ENCODE measurements at regions of chr16 and their contacts with region 1.

Region 1: GRCh38 chr16:73161977-73162376 is 114.0 kb upstream of the ZFHX3 start:
- DNase-seq: no peak
- H3K4me3 Mint-ChIP-seq: no peak overlapping the region
- H3K27ac Mint-ChIP-seq: no peak overlapping the region
- H3K4me1 Mint-ChIP-seq: peaks cover 11% of the 10 kb centered on the region
- H3K27me3 Mint-ChIP-seq: no peaks in the 10 kb centered on the region
- CTCF ChIP-seq: no peak

Region 2: DNA sequence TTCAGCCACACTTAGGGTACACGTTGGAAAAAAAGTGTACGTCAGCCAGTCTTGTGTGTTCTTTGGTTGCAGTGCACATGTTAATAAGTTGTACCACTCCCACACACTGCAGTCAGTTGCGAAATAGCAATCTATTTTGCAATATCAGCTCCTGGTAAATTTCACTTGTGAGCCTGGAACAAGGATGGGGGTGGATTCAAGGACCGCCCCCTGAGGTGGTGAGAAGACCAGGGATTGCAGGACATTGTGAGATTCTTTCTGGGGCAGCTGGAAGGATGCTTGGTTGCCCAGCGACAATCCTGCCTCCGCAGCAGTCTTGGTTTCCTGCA is 35.5 kb before region 1 on chr16:
- CTCF ChIA-PET with region 1: no interaction called
- POLR2A ChIA-PET with region 1: no interaction called
- intact Hi-C with region 1: loop called (anchors 5 kb)
- DNase-seq: peak; percentile 93
- H3K4me3 Mint-ChIP-seq: no peak overlapping the region
- H3K27ac Mint-ChIP-seq: no peak overlapping the region
- H3K4me1 Mint-ChIP-seq: peaks cover 22% of the 10 kb centered on the region
- H3K27me3 Mint-ChIP-seq: no peaks in the 10 kb centered on the region
- CTCF ChIP-seq: no peak

Measured in MCF 10A (cell line).